Activated CD8-positive, alpha-beta T cell treated with anti-CD3 and anti-CD28 coated beads for 36 hours (primary cell): ENCODE measurements at regions of chr1 and their contacts with region 1.

Region 1: GRCh38 chr1:110209715-110210603 is at the start of gene KCNC4:
- DNase-seq: peak; percentile 93
- ATAC-seq: peak; percentile 90
- H3K4me3 Mint-ChIP-seq: peak within 1 kb of the TSS; percentile 87
- H3K27ac Mint-ChIP-seq: peak within 1 kb of the TSS; percentile 85
- H3K4me1 Mint-ChIP-seq: peaks cover 44% of the 10 kb centered on the region
- H3K27me3 Mint-ChIP-seq: no peaks in the 10 kb centered on the region
- CTCF ChIP-seq: no peak
- total RNA-seq, gene KCNC4: 10.7 to 12.2 TPM

Region 2: GRCh38 chr1:110131891-110132290 is 78.1 kb before region 1 on chr1:
- CTCF ChIA-PET with region 1: no interaction called
- POLR2A ChIA-PET with region 1: no interaction called
- intact Hi-C with region 1: no loop called
- DNase-seq: no peak
- ATAC-seq: no peak
- H3K4me3 Mint-ChIP-seq: no peak overlapping the region
- H3K27ac Mint-ChIP-seq: no peak overlapping the region
- H3K4me1 Mint-ChIP-seq: peaks cover 2% of the 10 kb centered on the region
- H3K27me3 Mint-ChIP-seq: peaks cover 39% of the 10 kb centered on the region
- CTCF ChIP-seq: no peak

Region 3: GRCh38 chr1:110188035-110188618 is 21.8 kb before region 1 on chr1:
- CTCF ChIA-PET with region 1: interaction called, 16 read pairs
- POLR2A ChIA-PET with region 1: no interaction called
- intact Hi-C with region 1: no loop called
- DNase-seq: no peak
- ATAC-seq: no peak
- H3K4me3 Mint-ChIP-seq: no peak overlapping the region
- H3K27ac Mint-ChIP-seq: no peak overlapping the region
- H3K4me1 Mint-ChIP-seq: peaks cover 9% of the 10 kb centered on the region
- H3K27me3 Mint-ChIP-seq: peaks cover 8% of the 10 kb centered on the region
- CTCF ChIP-seq: no peak

Region 4: DNA sequence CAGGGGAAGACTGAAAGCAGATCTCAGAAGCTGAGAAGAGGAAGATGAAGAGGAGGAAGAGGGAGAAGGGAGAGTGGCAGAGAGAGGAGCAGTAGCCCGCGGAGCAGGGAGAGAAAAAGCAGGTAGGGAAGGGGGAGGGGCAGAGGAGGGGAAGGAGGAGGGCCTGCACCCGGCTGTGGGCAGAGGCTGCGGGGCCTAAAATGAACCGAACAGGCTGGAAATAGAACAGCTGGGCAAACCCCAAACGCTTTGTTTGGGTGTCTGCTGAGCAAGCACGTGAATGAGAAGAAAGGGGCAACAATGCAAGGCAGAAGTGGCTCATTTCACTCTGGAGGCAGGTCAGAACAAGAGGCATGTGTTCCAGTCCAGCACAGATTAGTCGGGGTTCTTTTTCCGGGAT is 33.6 kb after region 1 on chr1:
- CTCF ChIA-PET with region 1: interaction called, 31 read pairs
- POLR2A ChIA-PET with region 1: interaction called, 3 read pairs
- intact Hi-C with region 1: no loop called
- DNase-seq: peak; percentile 20
- ATAC-seq: peak; percentile 58
- H3K4me3 Mint-ChIP-seq: no peak overlapping the region
- H3K27ac Mint-ChIP-seq: no peak overlapping the region
- H3K4me1 Mint-ChIP-seq: peaks cover 18% of the 10 kb centered on the region
- H3K27me3 Mint-ChIP-seq: no peaks in the 10 kb centered on the region
- CTCF ChIP-seq: no peak

Region 5: DNA sequence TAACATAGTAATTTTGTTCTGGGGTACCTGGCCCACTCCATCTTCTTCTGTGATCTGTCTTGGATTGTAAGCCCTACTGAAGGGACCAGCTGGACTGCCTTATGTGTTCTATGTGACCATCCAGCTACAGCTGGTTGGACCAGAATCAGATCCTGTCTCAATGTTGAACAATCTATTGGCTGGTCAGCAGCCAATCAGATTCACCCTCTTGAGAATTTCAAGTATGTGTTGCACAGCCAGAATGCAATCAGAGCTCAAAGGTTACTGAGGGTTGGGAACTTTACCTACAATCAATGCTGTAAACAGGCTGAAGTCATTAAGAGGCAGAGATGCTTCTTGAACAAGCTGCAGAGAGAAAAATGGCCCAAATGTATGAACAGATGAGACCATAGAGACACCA is 62.1 kb after region 1 on chr1:
- CTCF ChIA-PET with region 1: interaction called, 35 read pairs
- POLR2A ChIA-PET with region 1: no interaction called
- intact Hi-C with region 1: no loop called
- DNase-seq: no peak
- ATAC-seq: no peak
- H3K4me3 Mint-ChIP-seq: no peak overlapping the region
- H3K27ac Mint-ChIP-seq: no peak overlapping the region
- H3K4me1 Mint-ChIP-seq: no peaks in the 10 kb centered on the region
- H3K27me3 Mint-ChIP-seq: peaks cover 6% of the 10 kb centered on the region
- CTCF ChIP-seq: no peak

Region 6: DNA sequence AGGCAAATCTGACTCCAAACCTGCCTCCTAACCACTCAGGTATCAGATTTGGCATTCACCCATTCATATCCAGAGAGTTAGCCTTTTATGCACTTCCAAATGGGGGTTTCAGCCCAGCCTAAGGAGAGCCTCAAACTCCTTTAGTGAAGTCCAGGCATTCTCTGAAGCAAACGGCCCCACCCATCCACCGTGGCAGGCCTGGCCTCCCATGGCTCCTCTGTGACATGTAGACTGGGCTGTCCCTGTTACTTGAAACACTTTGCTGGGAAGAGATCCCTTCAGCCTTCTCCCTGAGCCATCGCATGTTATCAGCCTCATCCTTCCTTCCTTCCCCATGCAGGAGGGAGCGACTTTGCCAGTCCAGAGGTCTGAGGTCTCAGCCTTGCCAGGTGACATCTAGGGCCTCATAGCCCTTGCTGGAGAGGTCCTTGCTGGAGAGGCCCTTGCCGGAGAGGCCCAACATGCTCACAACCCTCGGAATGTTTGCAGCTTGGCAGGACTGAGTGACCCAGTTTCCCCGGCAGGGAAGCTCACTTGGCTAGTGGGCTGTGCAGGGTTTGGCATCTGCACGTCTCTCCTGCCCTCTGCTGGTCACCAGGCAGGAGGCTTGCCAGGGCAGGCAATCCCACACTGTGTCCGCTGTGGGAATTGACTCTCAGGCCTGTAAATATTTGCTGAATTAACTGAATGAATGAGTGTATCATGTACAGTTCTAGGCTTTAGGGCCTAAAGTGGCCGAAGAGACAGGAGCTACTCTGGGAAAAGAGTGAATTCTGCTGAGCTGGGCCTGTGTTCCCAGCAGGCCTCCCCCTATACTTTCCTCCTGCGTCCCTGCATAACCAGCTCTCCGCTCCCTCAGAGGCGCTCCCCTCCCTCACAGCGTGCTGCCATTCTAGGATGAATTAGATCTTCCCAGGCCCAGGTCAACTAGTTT is 102.5 kb after region 1 on chr1:
- CTCF ChIA-PET with region 1: interaction called, 761 read pairs
- POLR2A ChIA-PET with region 1: interaction called, 8 read pairs
- intact Hi-C with region 1: no loop called
- DNase-seq: peak; percentile 78
- ATAC-seq: peak; percentile 99
- H3K4me3 Mint-ChIP-seq: no peak overlapping the region
- H3K27ac Mint-ChIP-seq: no peak overlapping the region
- H3K4me1 Mint-ChIP-seq: no peaks in the 10 kb centered on the region
- H3K27me3 Mint-ChIP-seq: no peaks in the 10 kb centered on the region
- CTCF ChIP-seq: peak; percentile 88

Region 7: DNA sequence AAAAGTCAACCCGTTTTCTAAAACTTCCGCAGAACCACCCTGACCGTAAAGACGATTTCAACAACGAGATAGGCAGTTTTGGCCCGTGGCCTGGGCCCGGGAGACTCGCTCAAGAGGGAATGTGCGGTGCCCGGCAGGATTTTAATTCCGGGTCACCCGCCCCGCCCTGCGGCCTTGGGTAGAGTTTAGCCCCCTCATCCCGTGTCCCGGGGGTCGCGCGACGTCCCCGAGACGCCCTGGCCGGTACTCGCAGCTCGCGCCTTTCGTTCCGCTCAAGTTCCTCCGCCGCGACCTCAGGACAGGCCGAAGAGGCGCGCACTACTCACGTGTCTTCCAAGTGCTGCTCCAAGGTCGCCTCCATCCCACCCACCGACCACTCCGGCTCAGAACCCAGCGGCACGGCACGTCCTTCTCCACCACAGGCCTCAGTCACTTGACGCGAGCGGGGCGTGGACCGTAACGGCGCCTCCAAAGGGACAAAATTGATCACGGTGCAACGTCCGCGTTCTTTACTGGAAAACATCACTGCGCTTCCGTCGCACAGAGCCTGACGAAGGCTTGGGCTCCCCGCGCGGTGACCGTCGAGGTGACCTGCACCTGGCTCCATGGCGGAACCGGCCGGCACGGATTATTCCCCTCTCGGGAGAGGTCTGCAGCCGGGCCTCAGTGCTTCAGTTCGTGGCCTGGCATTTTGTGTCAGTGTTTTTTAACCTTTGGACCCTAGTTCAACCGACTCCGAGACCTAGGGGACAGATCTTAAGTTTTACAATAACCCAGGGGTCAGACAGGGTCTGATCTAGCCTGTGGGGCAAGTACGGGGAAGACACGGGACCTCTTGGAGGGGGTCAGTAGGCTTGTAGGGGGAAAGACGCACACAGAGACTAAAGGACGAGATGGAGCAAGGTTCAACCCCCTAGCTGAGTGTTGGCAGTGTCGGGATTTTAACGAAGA is 197.6 kb after region 1 on chr1 and contains the start of gene LAMTOR5:
- CTCF ChIA-PET with region 1: interaction called, 29 read pairs
- POLR2A ChIA-PET with region 1: interaction called, 3 read pairs
- intact Hi-C with region 1: no loop called
- DNase-seq: peak; percentile 96
- ATAC-seq: peak; percentile 94
- H3K4me3 Mint-ChIP-seq: peak within 1 kb of the TSS; percentile 98
- H3K27ac Mint-ChIP-seq: peak within 1 kb of the TSS; percentile 100
- H3K4me1 Mint-ChIP-seq: peaks cover 19% of the 10 kb centered on the region
- H3K27me3 Mint-ChIP-seq: no peaks in the 10 kb centered on the region
- CTCF ChIP-seq: no peak
- total RNA-seq, gene LAMTOR5: 154 to 160 TPM